Activated B cell treated with CpG ODN at 0.5 μM for 24 hours (primary cell): ENCODE measurements at regions of chr5 and their contacts with region 1.

Region 1: DNA sequence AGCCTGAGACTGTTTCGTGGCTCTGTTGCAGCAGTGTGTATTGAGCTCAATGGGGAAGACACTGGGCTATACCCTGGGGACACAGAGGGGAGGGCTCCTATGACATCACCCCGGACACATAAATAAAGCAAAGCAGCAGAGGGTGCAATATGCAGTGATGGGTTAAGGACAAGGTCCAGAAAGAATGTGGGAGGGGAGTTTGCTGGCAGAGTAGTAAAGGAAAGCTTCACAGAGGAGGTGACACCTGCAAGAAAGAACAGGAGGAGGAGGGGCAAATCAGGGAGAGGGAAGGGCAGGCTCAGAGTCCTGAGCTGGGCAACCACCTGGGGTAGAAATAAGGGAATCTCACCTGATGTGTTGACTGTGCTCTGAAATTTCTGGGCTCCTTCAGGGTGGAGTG is 35.3 kb upstream of the CDKN2AIPNL start:
- DNase-seq: peak; percentile 44
- ATAC-seq: peak; percentile 84
- H3K4me3 Mint-ChIP-seq: peak overlapping the region; percentile 13
- H3K27ac Mint-ChIP-seq: peak overlapping the region; percentile 76
- H3K4me1 Mint-ChIP-seq: peaks cover 53% of the 10 kb centered on the region
- H3K27me3 Mint-ChIP-seq: no peaks in the 10 kb centered on the region
- CTCF ChIP-seq: no peak

Region 2: DNA sequence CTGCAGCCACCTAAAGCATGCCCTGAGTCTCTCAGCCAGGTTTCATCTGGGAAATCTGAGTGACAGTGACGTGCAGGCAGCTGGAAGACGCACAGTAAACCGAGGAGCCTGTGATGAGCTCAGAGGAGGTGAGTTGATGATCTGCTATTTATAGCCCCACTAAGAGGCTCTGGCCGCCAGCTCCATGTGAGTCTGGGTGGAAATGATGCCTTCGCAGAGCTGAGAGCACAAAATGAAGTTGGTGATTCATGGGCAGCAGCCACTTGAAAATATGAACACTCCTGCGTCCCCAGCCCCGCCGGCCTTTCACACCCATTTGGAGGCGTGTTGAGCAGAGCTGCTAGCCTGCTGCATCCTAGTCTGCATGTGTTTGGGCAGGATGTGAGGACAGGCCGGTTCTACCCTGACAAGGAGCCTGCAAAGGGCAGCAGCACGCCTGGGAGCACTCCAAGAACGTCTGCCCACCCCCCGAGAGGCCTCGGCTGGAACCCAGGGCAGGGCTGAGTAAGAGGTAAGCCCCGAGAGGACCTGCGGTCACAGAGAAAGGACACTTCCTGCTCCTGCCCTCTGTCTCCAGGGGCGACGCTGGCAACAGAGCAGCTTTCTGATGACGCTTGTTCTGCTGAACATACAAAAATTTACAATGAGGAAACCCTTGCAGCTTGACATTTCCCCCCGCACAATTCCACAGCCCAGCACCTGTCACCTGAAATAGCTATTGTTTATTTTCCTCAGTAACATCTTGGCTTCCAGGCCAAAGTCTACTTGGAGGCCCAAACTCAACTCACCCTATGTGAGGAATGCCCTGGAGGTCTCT is 10.2 kb before region 1 on chr5:
- CTCF ChIA-PET with region 1: no interaction called
- POLR2A ChIA-PET with region 1: interaction called, 18 read pairs
- intact Hi-C with region 1: loop called (anchors 1 kb)
- DNase-seq: peak; percentile 64
- ATAC-seq: peak; percentile 95
- H3K4me3 Mint-ChIP-seq: peak overlapping the region; percentile 56
- H3K27ac Mint-ChIP-seq: peak overlapping the region; percentile 68
- H3K4me1 Mint-ChIP-seq: peaks cover 25% of the 10 kb centered on the region
- H3K27me3 Mint-ChIP-seq: no peaks in the 10 kb centered on the region
- CTCF ChIP-seq: no peak

Region 3: GRCh38 chr5:134541736-134542376 is 94.9 kb after region 1 on chr5:
- CTCF ChIA-PET with region 1: no interaction called
- POLR2A ChIA-PET with region 1: interaction called, 3 read pairs
- intact Hi-C with region 1: loop called (anchors 5 kb)
- DNase-seq: no peak
- ATAC-seq: no peak
- H3K4me3 Mint-ChIP-seq: peak overlapping the region; percentile 78
- H3K27ac Mint-ChIP-seq: peak overlapping the region; percentile 96
- H3K4me1 Mint-ChIP-seq: peaks cover 86% of the 10 kb centered on the region
- H3K27me3 Mint-ChIP-seq: no peaks in the 10 kb centered on the region
- CTCF ChIP-seq: no peak